Calu3 (cell line): ENCODE measurements at regions of chr12 and their contacts with region 1.

Region 1: DNA sequence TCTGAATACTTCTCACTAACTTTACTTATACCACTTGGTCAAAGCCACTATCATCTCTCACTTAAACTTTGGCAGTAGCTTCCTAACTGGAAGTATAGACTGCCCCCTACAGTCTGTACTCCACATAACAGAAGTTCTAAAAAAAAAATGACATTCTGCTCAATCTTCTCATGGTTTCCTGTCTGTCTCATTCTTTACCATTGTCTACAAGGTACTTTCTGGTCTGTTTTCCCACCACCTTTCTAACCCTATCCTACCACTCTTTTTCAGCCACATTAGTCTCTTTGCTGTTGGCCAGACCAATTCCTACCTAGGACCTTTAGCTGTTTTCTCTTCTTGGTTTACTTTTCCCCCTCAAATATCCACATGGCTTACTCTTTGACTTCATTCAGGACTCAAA is 14.7 kb downstream of the CPSF6 start:
- DNase-seq: no peak
- H3K4me3 Mint-ChIP-seq: no peak overlapping the region
- H3K27ac Mint-ChIP-seq: peak overlapping the region; percentile 19
- H3K4me1 Mint-ChIP-seq: peaks cover 36% of the 10 kb centered on the region
- H3K27me3 Mint-ChIP-seq: no peaks in the 10 kb centered on the region
- CTCF ChIP-seq: peak; percentile 41

Region 2: GRCh38 chr12:68831272-68831671 is 422.8 kb before region 1 on chr12:
- CTCF ChIA-PET with region 1: interaction called, 5 read pairs
- intact Hi-C with region 1: loop called (anchors 10 kb)
- DNase-seq: no peak
- H3K4me3 Mint-ChIP-seq: no peak overlapping the region
- H3K27ac Mint-ChIP-seq: no peak overlapping the region
- H3K4me1 Mint-ChIP-seq: no peaks in the 10 kb centered on the region
- H3K27me3 Mint-ChIP-seq: no peaks in the 10 kb centered on the region
- CTCF ChIP-seq: no peak

Region 3: GRCh38 chr12:69231479-69231878 is 22.6 kb before region 1 on chr12:
- CTCF ChIA-PET with region 1: no interaction called
- intact Hi-C with region 1: no loop called
- DNase-seq: no peak
- H3K4me3 Mint-ChIP-seq: no peak overlapping the region
- H3K27ac Mint-ChIP-seq: no peak overlapping the region
- H3K4me1 Mint-ChIP-seq: no peaks in the 10 kb centered on the region
- H3K27me3 Mint-ChIP-seq: no peaks in the 10 kb centered on the region
- CTCF ChIP-seq: no peak